ENCODE measurements at regions of chr5 and their contacts with region 1.

Region 1: DNA sequence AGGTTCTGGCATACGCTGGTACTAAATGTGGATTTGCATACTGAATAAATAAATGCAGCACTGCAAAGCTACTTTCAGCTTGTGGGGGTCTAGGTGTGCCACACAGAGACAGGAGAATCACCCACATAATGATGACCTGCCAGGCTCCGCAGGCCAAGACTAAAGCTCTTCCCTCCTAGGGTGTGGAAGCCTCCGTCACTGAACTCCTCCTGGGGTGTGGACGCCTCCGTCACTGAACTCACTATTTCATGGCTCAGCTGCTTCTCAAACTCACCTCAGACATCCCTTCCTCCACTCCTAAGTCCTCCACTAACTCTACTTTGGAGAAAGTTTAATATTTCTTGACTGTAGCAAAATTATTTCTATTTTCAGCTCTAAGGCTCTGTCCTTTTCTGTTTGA is 65.3 kb upstream of the GOLPH3 start:
- DNase-seq: no peak

Region 2: DNA sequence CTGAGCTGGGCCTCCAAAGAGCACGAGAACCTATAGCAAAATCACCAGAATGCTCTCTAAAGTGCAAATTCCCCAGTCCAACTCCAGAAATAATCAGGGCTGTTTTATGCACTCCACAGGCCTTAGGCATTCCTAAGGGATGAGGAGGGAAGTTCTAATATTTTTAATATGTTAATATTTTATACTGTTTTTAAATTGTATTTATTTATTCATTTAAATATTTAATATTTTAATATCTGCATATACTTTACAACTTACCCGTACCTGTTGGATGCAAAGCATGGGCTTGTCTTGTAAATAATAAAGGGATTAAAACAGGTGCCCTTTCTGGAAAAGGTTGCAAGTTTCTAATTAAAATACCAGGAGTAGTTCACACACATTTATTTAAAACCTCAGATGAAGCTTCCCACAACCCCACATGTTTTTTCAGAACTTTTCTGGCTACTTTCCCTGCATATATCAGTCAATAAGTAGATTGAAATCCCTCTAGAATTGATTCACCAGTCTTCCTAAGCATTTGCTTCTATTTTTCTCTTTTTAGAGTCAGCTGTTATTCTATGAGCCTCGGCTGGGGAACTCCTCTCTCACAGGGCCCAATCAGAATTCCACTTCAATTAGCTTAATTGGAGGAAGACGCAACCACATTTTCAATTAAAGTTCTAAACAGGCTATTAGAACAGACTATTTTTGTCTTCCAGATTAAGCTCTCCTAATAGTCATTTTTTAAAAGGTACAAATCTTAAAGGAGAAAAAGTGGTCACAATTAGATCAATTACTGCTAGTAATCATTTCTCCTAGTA is 905.1 kb before region 1 on chr5:
- intact Hi-C with region 1: no loop called
- DNase-seq: no peak

Region 3: GRCh38 chr5:32323741-32324140 is 84.4 kb after region 1 on chr5:
- intact Hi-C with region 1: loop called (anchors 5 kb)
- DNase-seq: no peak

Measured in posterior vena cava (tissue), 2 donors.